OCI-LY7 (cell line): ENCODE measurements at regions of chr11 and their contacts with region 1.

Region 1: GRCh38 chr11:93741094-93741881 is at the starts of genes C11orf54 and TAF1D:
- DNase-seq: peak; percentile 98
- H3K4me3 ChIP-seq: peak within 1 kb of the TSS; percentile 96
- H3K27ac ChIP-seq: peak within 1 kb of the TSS; percentile 78
- H3K4me1 ChIP-seq: peaks cover 34% of the 10 kb centered on the region
- CTCF ChIP-seq: no peak
- total RNA-seq, gene C11orf54: 25.8 and 29.5 TPM in 2 replicates
- total RNA-seq, gene TAF1D: 201 and 206 TPM in 2 replicates

Region 2: DNA sequence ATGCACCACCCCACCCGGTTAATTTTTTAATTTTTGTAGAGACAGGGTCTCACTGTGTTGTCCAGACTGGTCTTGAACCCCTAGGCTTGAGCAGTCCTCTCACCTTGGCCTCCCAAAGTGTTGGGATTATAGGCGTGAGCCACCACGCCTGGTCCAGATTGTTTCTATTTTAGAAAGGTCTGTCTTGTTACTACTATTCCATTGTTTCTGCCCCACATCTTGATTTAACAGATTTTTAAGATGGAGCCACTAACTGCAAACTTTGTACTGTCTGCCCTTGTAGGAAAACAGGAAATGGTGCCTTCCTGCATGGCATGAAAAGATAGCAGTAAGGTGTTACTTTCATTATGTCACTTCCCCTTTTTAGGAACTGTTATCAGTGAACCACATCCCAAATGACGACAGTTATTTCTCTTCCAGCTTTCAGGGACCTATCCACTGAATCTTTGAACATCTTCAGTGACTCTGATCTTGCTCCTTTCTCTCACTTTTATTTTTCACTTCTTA is 23.2 kb before region 1 on chr11:
- CTCF ChIA-PET with region 1: no interaction called
- POLR2A ChIA-PET with region 1: interaction called, 10 read pairs
- intact Hi-C with region 1: no loop called
- DNase-seq: peak; percentile 62
- H3K4me3 ChIP-seq: no peak overlapping the region
- H3K27ac ChIP-seq: peak overlapping the region; percentile 21
- H3K4me1 ChIP-seq: peaks cover 15% of the 10 kb centered on the region
- CTCF ChIP-seq: no peak

Region 3: GRCh38 chr11:93727985-93728791 is 13.1 kb before region 1 on chr11:
- CTCF ChIA-PET with region 1: no interaction called
- POLR2A ChIA-PET with region 1: interaction called, 24 read pairs
- intact Hi-C with region 1: no loop called
- DNase-seq: peak; percentile 11
- H3K4me3 ChIP-seq: no peak overlapping the region
- H3K27ac ChIP-seq: no peak overlapping the region
- H3K4me1 ChIP-seq: peaks cover 9% of the 10 kb centered on the region
- CTCF ChIP-seq: no peak

Region 4: DNA sequence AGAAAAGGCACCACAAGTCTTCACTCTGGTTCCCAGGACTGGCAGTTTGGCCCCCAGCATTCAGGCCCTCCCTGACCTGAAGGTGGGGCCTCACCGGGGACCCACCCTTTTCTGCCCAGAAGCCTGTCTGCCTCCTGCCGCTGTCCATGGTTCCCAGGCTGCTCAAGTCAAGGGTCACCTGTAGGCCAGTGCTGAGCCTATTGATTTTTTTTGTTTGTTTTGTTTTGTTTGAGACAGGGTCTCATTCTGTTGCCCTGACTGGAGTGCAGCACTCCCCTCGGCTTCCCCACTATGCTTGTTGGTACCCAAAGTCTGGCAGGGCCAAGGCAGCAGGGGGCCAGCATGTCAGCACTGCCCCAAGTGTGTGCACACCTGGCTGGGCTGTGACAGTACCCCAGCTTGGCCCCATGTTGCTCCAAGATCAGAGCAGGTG is 31.8 kb after region 1 on chr11:
- CTCF ChIA-PET with region 1: no interaction called
- POLR2A ChIA-PET with region 1: interaction called, 14 read pairs
- intact Hi-C with region 1: no loop called
- DNase-seq: no peak
- H3K4me3 ChIP-seq: no peak overlapping the region
- H3K27ac ChIP-seq: no peak overlapping the region
- H3K4me1 ChIP-seq: no peaks in the 10 kb centered on the region
- CTCF ChIP-seq: no peak

Region 5: DNA sequence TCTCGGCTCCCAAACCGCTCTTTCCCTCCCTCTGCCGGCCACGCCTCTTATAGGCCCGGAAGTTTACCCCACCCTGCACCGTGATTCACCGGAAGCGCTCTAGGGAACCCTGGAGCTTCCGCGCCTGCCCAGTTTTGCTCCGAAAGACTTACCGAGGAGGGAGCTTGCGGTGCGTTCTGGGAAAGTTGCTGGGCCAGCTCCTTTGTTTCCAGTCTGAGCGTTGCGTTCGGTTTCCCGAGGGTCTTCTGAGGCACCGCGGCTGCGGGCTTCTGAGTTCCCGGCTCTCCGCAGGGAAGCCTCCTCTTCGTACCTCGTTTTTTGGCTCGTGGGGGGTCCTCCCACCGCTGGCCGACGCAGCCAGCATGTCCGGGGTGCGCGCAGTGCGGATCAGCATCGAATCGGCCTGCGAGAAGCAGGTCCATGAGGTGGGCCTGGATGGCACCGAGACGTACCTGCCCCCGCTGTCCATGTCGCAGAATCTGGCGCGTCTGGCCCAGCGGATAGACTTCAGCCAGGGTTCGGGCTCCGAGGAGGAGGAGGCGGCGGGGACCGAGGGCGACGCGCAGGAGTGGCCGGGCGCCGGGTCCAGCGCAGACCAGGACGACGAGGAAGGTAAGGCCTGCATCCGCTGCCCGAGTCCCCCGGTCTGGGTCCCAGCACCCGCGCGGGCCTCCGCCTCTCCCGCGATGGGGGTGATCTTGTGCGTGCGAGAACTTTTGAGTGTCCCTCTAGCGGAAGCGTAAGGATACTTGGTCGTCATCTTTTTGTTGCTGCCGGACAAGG is 43.1 kb after region 1 on chr11 and contains the start of gene MED17:
- CTCF ChIA-PET with region 1: interaction called, 5 read pairs
- POLR2A ChIA-PET with region 1: interaction called, 49 read pairs
- intact Hi-C with region 1: loop called (anchors 1 kb)
- DNase-seq: peak; percentile 93
- H3K4me3 ChIP-seq: peak within 1 kb of the TSS; percentile 88
- H3K27ac ChIP-seq: peak within 1 kb of the TSS; percentile 72
- H3K4me1 ChIP-seq: peaks cover 29% of the 10 kb centered on the region
- CTCF ChIP-seq: peak; percentile 57; the same call in 1 of the 2 replicates
- total RNA-seq, gene MED17: 21.8 and 23.0 TPM in 2 replicates

Region 6: GRCh38 chr11:93801366-93801765 is 60.1 kb after region 1 on chr11:
- CTCF ChIA-PET with region 1: no interaction called
- POLR2A ChIA-PET with region 1: interaction called, 10 read pairs
- intact Hi-C with region 1: no loop called
- DNase-seq: no peak
- H3K4me3 ChIP-seq: no peak overlapping the region
- H3K27ac ChIP-seq: no peak overlapping the region
- H3K4me1 ChIP-seq: no peaks in the 10 kb centered on the region
- CTCF ChIP-seq: no peak